HEK293 (cell line): ENCODE measurements at regions of chr6 and their contacts with region 1.

Region 1: GRCh38 chr6:45714741-45715507 is 300.7 kb downstream of the CLIC5 start:
- H3K4me3 ChIP-seq: no peak overlapping the region
- H3K27ac ChIP-seq: no peak overlapping the region
- H3K4me1 ChIP-seq: peaks cover 9% of the 10 kb centered on the region
- CTCF ChIP-seq: peak; percentile 62

Region 2: GRCh38 chr6:44655412-44656342 is 1059.2 kb before region 1 on chr6:
- CTCF ChIA-PET with region 1: interaction called, 44 read pairs
- POLR2A ChIA-PET with region 1: interaction called, 3 read pairs
- H3K4me3 ChIP-seq: no peak overlapping the region
- H3K27ac ChIP-seq: no peak overlapping the region; the same call in 1 of the 2 replicates
- H3K4me1 ChIP-seq: peaks cover 12% of the 10 kb centered on the region
- CTCF ChIP-seq: peak; percentile 88

Region 3: DNA sequence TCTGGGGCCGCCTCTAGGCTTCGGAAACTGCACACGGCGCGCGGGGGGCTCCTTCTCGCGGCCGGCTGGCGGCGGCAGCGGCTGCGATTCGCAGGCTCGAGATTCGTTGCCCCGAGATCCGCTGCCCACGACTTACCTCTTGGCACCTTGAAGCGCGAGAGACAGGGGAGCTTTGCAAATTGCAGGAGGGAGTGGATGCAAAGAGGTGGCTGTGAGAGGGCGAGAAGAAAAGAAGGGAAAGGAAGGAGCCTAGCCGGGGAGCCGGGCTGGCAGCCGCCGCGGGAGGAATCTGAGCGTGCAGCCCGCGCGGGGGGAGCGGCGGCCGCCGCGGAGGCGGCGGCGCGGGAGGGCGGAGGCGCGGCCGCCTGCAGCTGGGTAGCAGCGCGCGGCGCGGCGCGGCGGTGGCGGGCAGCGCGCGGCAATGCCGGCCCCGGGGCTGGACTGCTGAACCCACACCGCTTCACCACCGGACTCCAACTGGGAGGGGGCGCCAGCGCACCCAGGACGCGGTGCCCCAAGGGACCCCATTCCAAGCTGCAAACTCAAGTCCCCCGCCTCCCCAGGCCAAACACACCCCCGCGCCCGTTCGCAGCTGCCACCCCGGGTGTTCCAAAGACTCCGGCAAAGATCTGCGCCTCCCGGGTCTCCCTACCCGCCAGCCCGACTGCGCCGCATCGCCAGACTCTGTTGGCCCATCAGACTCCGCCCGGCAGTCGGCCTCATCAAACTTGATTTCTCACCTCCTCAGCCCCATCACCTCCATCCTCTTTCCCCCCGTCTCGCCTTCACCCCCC is 293.0 kb before region 1 on chr6:
- CTCF ChIA-PET with region 1: interaction called, 10 read pairs
- POLR2A ChIA-PET with region 1: interaction called, 3 read pairs
- H3K4me3 ChIP-seq: peak overlapping the region; percentile 87
- H3K27ac ChIP-seq: peak overlapping the region; percentile 81
- H3K4me1 ChIP-seq: peaks cover 9% of the 10 kb centered on the region
- CTCF ChIP-seq: peak; percentile 67

Region 4: GRCh38 chr6:45614896-45615295 is 100.0 kb before region 1 on chr6:
- CTCF ChIA-PET with region 1: interaction called, 12 read pairs
- POLR2A ChIA-PET with region 1: no interaction called
- H3K4me3 ChIP-seq: no peak overlapping the region
- H3K27ac ChIP-seq: no peak overlapping the region
- H3K4me1 ChIP-seq: no peaks in the 10 kb centered on the region
- CTCF ChIP-seq: no peak

Region 5: GRCh38 chr6:45763281-45763680 is 48.4 kb after region 1 on chr6:
- CTCF ChIA-PET with region 1: no interaction called
- POLR2A ChIA-PET with region 1: no interaction called
- H3K4me3 ChIP-seq: no peak overlapping the region
- H3K27ac ChIP-seq: no peak overlapping the region
- H3K4me1 ChIP-seq: no peaks in the 10 kb centered on the region; the same call in 1 of the 2 replicates
- CTCF ChIP-seq: no peak

Region 6: GRCh38 chr6:45922728-45923351 is 207.9 kb after region 1 on chr6:
- CTCF ChIA-PET with region 1: interaction called, 50 read pairs
- POLR2A ChIA-PET with region 1: no interaction called
- H3K4me3 ChIP-seq: no peak overlapping the region
- H3K27ac ChIP-seq: no peak overlapping the region
- H3K4me1 ChIP-seq: no peaks in the 10 kb centered on the region
- CTCF ChIP-seq: peak; percentile 84